ENCODE measurements at regions of chr7 and their contacts with region 1.

Region 1: GRCh38 chr7:147412782-147413556 is 1177.6 kb upstream of the C7orf33 start:
- DNase-seq: no peak

Region 2: DNA sequence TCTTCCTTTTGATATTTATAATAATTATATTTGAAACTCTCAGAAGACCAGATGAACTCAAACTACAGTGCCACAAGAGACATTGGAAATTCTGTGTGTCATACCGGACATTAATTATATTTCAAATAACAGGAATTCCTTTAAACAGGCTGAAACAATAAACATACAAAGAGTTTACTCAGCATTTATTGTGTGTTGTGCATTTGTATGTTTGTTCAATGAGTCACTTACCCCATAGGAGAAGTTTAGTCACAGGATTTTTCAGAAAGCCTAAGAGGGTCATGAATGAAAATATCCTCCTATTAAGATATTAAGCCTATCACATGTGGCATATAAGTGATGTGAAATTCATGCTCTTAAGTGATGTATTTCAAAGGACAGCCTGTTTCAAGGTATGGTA is 729.5 kb before region 1 on chr7:
- intact Hi-C with region 1: no loop called
- DNase-seq: no peak

Region 3: GRCh38 chr7:147380926-147381325 is 32.0 kb before region 1 on chr7:
- intact Hi-C with region 1: loop called in 1 of 2 experiments (anchors 1 kb)
- DNase-seq: no peak

Region 4: GRCh38 chr7:147432079-147432478 is 19.1 kb after region 1 on chr7:
- intact Hi-C with region 1: no loop called
- DNase-seq: no peak

Region 5: GRCh38 chr7:147742301-147742700 is 329.3 kb after region 1 on chr7:
- intact Hi-C with region 1: no loop called
- DNase-seq: no peak